PC-3 (cell line): ENCODE measurements at regions of chr3 and their contacts with region 1.

Region 1: GRCh38 chr3:19885468-19885867 is 48.5 kb downstream of the EFHB start:
- DNase-seq: peak; percentile 70
- ATAC-seq: no peak
- H3K4me3 ChIP-seq: no peak overlapping the region
- H3K27ac ChIP-seq: no peak overlapping the region
- H3K4me1 ChIP-seq: peaks cover 16% of the 10 kb centered on the region
- H3K27me3 ChIP-seq: no peaks in the 10 kb centered on the region
- CTCF ChIP-seq: peak; percentile 83

Region 2: GRCh38 chr3:19946832-19947548 is 61.5 kb after region 1 on chr3 and contains the start of gene RAB5A:
- CTCF ChIA-PET with region 1: no interaction called
- POLR2A ChIA-PET with region 1: interaction called, 3 read pairs
- intact Hi-C with region 1: loop called (anchors 1 kb)
- DNase-seq: peak; percentile 99
- ATAC-seq: peak; percentile 88
- H3K4me3 ChIP-seq: peak within 1 kb of the TSS; percentile 87
- H3K27ac ChIP-seq: peak within 1 kb of the TSS; percentile 87
- H3K4me1 ChIP-seq: peaks cover 38% of the 10 kb centered on the region
- H3K27me3 ChIP-seq: no peaks in the 10 kb centered on the region
- CTCF ChIP-seq: no peak
- total RNA-seq, gene RAB5A: 61.3 and 86.8 TPM in 2 replicates

Region 3: GRCh38 chr3:19972051-19972454 is 86.6 kb after region 1 on chr3:
- CTCF ChIA-PET with region 1: no interaction called
- POLR2A ChIA-PET with region 1: no interaction called
- intact Hi-C with region 1: loop called (anchors 5 kb)
- DNase-seq: peak; percentile 95
- ATAC-seq: peak; percentile 89
- H3K4me3 ChIP-seq: no peak overlapping the region
- H3K27ac ChIP-seq: no peak overlapping the region
- H3K4me1 ChIP-seq: peaks cover 11% of the 10 kb centered on the region
- H3K27me3 ChIP-seq: no peaks in the 10 kb centered on the region
- CTCF ChIP-seq: no peak

Region 4: GRCh38 chr3:20123131-20123651 is 237.7 kb after region 1 on chr3:
- CTCF ChIA-PET with region 1: no interaction called
- POLR2A ChIA-PET with region 1: no interaction called
- intact Hi-C with region 1: loop called (anchors 5 kb)
- DNase-seq: no peak
- ATAC-seq: no peak
- H3K4me3 ChIP-seq: no peak overlapping the region
- H3K27ac ChIP-seq: no peak overlapping the region
- H3K4me1 ChIP-seq: peaks cover 10% of the 10 kb centered on the region
- H3K27me3 ChIP-seq: no peaks in the 10 kb centered on the region
- CTCF ChIP-seq: no peak

Region 5: GRCh38 chr3:20185701-20186598 is 300.5 kb after region 1 on chr3 and contains the start of gene SGO1:
- CTCF ChIA-PET with region 1: no interaction called
- POLR2A ChIA-PET with region 1: no interaction called
- intact Hi-C with region 1: loop called (anchors 2 kb)
- DNase-seq: peak; percentile 99
- ATAC-seq: peak; percentile 92
- H3K4me3 ChIP-seq: peak within 1 kb of the TSS; percentile 89
- H3K27ac ChIP-seq: peak within 1 kb of the TSS; percentile 66
- H3K4me1 ChIP-seq: peaks cover 16% of the 10 kb centered on the region
- H3K27me3 ChIP-seq: no peaks in the 10 kb centered on the region
- CTCF ChIP-seq: 0 out of 2 replicates have a peak, but pooled peaks have one; percentile 13
- total RNA-seq, gene SGO1: 12.6 and 13.6 TPM in 2 replicates